Motor neuron (in vitro differentiated cells): ENCODE measurements at regions of chr17 and their contacts with region 1.

Region 1: GRCh38 chr17:33927732-33928133 is 327.4 kb upstream of the CCL2 start:
- ATAC-seq: peak in 4 of 8 experiments; percentile 49 to 87 (median 72)
- H3K4me3 ChIP-seq: no peak overlapping the region
- H3K27ac ChIP-seq: no peak overlapping the region
- H3K4me1 ChIP-seq: peaks cover 0 to 9% of the 10 kb centered on the region in 2 donors

Region 2: DNA sequence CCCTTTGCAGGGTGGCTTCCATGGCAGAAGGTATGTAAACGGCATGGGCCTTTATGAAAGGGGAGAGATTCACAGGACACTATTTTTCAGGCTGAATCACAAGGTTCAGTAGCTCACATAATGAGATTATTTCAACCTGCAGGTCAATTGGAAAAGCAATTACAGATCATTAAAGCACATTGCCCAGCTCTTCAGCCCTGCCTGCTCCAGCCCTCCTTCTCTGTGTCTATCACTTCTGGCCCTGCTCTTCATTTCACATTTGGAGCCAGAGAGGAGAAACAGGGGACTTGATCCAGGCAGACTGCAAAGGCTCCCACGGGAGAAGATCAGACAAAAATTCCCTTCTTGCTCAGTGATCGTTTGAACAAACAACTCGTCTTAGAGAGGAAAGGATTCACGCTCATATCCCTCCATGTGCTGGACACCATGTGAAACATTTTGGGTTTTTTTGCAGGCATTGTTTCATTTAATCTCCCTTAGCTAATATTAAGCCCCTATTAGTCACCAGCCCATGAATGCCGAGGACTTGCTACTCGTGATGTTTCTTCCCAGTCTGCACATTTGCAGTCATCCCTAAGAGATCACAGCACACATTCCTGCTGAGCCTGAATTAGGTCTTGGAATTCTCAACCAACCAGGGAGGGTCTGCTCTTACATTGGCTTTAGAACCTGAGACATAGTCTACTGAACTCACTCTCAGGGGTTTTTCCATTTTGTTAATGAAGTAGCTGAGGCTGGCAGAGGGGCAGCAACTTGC is 116.6 kb before region 1 on chr17:
- in situ Hi-C with region 1: no loop called
- ATAC-seq: peak in 6 of 8 experiments; percentile 23 to 60 (median 48)
- H3K4me3 ChIP-seq: no peak overlapping the region
- H3K27ac ChIP-seq: no peak overlapping the region
- H3K4me1 ChIP-seq: peaks cover 0 to 20% of the 10 kb centered on the region in 2 donors

Region 3: DNA sequence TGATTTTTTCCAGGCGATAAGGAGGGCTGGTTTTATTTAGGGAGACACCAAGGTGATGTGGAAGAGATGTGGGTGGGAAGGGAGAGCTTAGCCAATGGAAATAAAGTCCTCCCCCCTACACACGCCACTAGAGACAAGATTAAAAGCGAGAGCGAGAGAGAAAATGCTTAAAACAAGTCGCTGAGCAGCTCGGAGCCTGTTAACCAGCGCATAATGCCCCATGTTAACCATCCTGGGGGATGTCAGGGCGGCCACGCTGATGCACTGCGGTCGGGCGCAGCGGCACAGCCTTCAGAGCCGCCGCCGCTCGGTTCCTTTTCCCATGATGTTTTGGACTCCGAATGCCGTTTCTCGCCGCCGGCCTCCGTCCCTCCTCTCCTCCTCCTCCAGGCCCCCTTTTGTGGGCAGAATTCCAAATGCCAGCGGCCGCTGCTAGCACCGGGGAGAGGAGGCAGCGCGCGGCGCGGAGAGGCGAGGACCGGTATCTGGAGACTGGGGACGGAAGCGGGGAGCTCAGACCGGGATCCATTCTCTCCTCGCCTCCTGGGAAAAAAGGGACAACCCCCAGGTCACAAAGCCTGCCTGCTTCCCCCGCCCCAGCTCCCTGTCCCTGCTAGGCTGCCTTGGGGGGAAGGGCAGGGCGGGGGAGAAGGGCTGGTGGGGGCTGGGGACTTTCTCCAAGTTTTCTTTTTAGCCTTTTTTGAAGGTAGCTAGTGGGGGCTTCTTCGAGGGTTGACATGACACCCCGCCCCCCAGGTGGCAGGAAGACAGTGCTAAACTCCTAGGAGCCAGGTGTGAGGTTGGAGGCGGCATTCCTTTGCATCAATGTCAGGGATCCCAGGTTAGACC is 229.2 kb after region 1 on chr17:
- in situ Hi-C with region 1: loop called in 1 of 9 experiments (anchors 10 kb)
- ATAC-seq: peak in 7 of 8 experiments; percentile 33 to 77 (median 63)
- H3K4me3 ChIP-seq: peak overlapping the region; percentile 16 to 35 (median 30)
- H3K27ac ChIP-seq: no peak overlapping the region
- H3K4me1 ChIP-seq: peaks cover 0 to 21% of the 10 kb centered on the region in 2 donors